ENCODE measurements at regions of chr9 and their contacts with region 1.

Region 1: GRCh38 chr9:109887079-109887478 is 107.1 kb downstream of the PALM2AKAP2 start:
- DNase-seq: peak in 2 of 5 donors; percentile 36 to 54
- ATAC-seq: peak; percentile 77 to 88 (median 86)
- H3K4me3 ChIP-seq: no peak overlapping the region
- H3K27ac ChIP-seq: peak overlapping the region; percentile 35 to 87 (median 75)
- H3K4me1 ChIP-seq: peaks cover 2 to 61% (median 38%) of the 10 kb centered on the region in 12 donors
- H3K27me3 ChIP-seq: no peaks in the 10 kb centered on the region
- CTCF ChIP-seq: no peak
- POLR2A ChIP-seq: no peak

Region 2: DNA sequence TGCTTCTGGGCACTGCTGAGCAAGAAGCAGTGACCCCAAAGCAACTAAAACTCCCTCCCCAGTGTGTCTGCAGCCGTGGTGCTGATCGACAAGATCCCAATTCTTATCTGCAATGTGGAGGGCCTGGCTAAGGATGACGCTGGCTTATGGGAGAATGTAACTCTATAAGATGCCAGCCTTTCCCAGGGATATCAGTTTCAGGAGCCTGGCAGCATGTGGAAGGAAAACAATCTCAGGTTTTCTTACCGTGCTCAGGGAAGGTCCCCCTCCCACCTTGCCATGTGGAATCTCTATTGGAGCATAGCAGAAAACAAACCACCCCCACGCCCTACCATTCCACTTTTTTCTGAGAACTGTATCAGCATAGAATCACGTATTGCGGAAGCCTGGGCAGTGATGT is 301.3 kb before region 1 on chr9:
- intact Hi-C with region 1: loop called in 1 of 10 experiments (anchors 5 kb)
- DNase-seq: no peak
- ATAC-seq: no peak
- H3K4me3 ChIP-seq: no peak overlapping the region
- H3K27ac ChIP-seq: no peak overlapping the region
- H3K4me1 ChIP-seq: peaks cover 0 to 17% (median 6%) of the 10 kb centered on the region in 12 donors
- H3K27me3 ChIP-seq: no peaks in the 10 kb centered on the region
- CTCF ChIP-seq: no peak
- POLR2A ChIP-seq: no peak

Region 3: GRCh38 chr9:109705515-109705914 is 181.6 kb before region 1 on chr9:
- intact Hi-C with region 1: loop called in 2 of 10 experiments (anchors 5 to 10 kb)
- DNase-seq: no peak
- ATAC-seq: peak in 1 of 4 donors; percentile 38
- H3K4me3 ChIP-seq: no peak overlapping the region
- H3K27ac ChIP-seq: no peak overlapping the region
- H3K4me1 ChIP-seq: peaks cover 0 to 38% (median 19%) of the 10 kb centered on the region in 12 donors
- H3K27me3 ChIP-seq: no peaks in the 10 kb centered on the region
- CTCF ChIP-seq: peak in 1 of 12 donors; percentile 8
- POLR2A ChIP-seq: no peak

Region 4: DNA sequence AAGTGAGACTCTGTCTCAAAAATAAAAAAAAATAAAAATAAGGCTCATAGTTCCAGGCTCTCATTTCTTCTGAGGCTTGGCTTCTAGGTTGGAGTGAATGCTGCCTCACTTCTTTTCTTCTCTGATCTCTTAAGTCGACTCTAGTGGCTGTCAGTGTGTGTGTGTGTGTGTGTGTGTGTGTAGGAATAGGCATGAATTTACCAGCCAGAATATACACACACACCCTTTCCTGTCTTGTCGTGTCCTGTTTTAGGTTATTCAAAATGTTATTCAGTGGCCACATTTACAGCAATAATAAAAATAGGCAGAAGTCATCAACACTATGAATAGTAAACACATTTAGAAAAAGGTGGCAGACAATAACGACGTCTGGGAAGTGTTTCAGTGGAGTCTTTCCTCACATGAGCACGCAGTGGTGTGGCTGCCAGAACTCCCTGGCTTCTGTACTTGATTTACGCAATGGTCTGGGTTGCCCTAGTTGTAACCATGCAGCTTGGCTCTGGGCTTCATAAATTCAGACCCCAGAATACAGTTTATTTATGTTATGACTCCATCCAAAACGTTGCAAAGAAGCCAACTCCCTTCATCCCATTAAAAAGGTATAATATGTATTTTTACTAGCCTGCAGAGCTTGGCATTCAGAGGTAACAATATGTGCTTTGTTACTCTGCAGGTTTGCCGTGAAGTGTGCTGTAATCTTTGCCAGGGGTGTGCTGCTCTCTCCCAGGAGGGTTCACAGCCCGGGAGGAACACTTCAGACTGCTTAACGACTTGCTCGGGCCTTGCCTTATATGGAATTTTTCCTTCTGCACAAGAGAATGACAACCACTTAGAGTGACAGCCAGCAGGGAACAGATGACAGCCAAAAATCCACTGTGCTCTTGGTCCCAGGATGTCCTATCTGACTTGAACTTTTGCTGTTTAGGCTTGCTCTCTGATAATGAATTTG is 141.5 kb before region 1 on chr9:
- intact Hi-C with region 1: loop called in 1 of 10 experiments (anchors 5 kb)
- DNase-seq: peak; percentile 59 to 85 (median 67)
- ATAC-seq: peak; percentile 94 to 97 (median 96)
- H3K4me3 ChIP-seq: peak overlapping the region in 3 of 12 donors; percentile 3 to 23 (median 13)
- H3K27ac ChIP-seq: peak overlapping the region; percentile 1 to 87 (median 75)
- H3K4me1 ChIP-seq: peaks cover 0 to 41% (median 14%) of the 10 kb centered on the region in 12 donors
- H3K27me3 ChIP-seq: no peaks in the 10 kb centered on the region
- CTCF ChIP-seq: no peak
- POLR2A ChIP-seq: no peak

Region 5: DNA sequence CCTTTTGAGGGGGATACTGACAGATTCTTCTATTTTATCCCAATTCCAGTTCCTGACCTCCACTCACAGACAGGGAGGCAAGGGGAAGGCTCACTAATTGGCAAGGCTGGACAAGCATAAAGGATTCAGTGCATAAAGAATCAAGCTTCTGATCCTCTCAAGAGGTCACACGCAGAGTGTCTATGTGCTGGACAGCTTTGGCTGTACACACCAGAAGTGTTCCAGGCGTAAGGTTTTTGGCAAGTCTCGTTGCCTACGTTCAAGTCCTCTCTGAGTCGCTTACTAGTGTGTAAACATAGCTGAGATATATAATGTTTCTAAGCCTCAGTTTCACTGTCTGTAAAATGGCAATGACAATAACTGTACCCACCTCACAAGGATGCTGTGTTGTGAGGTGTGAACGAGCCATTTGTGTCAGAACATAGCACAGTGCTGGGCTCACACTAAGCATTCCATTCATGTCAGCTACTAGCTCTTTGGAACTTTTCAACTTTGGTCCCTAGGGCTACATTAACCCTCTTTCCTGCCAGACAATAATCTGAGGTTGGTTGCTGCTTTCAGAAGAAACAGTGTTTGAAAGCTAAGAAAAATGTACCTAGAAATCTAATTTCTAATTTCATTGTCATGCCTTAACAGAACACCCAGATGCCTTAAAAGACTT is 55.0 kb before region 1 on chr9:
- intact Hi-C with region 1: no loop called
- DNase-seq: peak in 1 of 5 donors; percentile 44
- ATAC-seq: peak; percentile 76 to 89 (median 86)
- H3K4me3 ChIP-seq: no peak overlapping the region
- H3K27ac ChIP-seq: peak overlapping the region in 5 of 12 donors; percentile 7 to 49 (median 19)
- H3K4me1 ChIP-seq: peaks cover 0 to 33% (median 12%) of the 10 kb centered on the region in 12 donors
- H3K27me3 ChIP-seq: no peaks in the 10 kb centered on the region
- CTCF ChIP-seq: no peak
- POLR2A ChIP-seq: no peak

Measured in heart left ventricle (tissue), 16 donors.